ENCODE measurements at regions of chr17 and their contacts with region 1.

Region 1: GRCh38 chr17:21043286-21044232 is 748 bp upstream of the USP22 start:
- DNase-seq: peak; percentile 95
- H3K4me3 Mint-ChIP-seq: peak overlapping the region; percentile 75
- H3K27ac Mint-ChIP-seq: peak overlapping the region; percentile 88
- H3K4me1 Mint-ChIP-seq: peaks cover 15% of the 10 kb centered on the region
- H3K27me3 Mint-ChIP-seq: no peaks in the 10 kb centered on the region

Region 2: DNA sequence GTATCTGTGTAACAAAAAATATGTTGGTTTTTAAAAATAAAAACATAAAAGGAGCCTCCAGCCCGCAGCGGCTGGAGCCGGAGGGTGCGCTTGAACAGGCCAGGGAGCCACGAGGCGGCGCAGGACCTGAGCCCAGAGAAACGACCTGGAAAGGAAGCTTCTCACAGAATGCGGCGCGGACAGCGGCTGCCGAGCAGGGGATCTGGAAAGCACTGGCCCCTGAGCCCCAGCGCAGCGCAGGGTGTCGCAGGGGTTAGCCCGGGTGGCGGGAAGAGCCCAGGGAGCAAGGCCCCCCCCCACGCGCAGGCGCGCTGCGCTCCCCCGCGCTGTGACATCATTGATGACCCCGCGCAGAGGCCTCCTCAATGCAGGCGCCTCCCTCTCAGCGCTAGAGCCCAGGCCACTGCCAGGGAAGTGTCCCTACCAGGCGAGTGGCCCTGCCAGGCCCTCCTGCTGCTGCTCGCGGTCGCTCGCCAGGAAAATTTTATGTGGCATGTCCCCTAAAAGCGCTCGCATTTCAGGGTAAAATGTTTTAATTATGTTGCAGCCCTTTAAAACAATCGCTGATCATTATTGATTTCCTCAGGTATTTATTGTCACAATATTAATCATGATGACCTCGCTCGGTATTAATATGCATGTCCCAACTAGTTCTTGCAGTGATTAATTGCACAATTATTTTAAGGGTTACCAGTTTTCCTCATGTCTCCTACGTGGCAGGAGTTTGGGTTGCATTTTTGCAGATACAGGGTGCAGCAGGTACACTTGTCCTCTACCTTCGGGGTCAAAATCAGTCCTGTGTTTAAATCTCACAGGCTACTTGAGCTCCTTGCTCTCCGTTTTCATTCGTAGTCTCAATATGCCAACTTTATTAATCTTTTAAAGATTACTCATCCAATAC is 134.9 kb before region 1 on chr17:
- intact Hi-C with region 1: loop called (anchors 1 kb)
- DNase-seq: peak; percentile 73
- H3K4me3 Mint-ChIP-seq: peak overlapping the region; percentile 75
- H3K27ac Mint-ChIP-seq: peak overlapping the region; percentile 27
- H3K4me1 Mint-ChIP-seq: peaks cover 6% of the 10 kb centered on the region
- H3K27me3 Mint-ChIP-seq: peaks cover 14% of the 10 kb centered on the region

Region 3: GRCh38 chr17:21019976-21020586 is 23.5 kb before region 1 on chr17:
- intact Hi-C with region 1: loop called (anchors 1 kb)
- DNase-seq: no peak
- H3K4me3 Mint-ChIP-seq: no peak overlapping the region
- H3K27ac Mint-ChIP-seq: no peak overlapping the region
- H3K4me1 Mint-ChIP-seq: peaks cover 20% of the 10 kb centered on the region
- H3K27me3 Mint-ChIP-seq: no peaks in the 10 kb centered on the region

Region 4: DNA sequence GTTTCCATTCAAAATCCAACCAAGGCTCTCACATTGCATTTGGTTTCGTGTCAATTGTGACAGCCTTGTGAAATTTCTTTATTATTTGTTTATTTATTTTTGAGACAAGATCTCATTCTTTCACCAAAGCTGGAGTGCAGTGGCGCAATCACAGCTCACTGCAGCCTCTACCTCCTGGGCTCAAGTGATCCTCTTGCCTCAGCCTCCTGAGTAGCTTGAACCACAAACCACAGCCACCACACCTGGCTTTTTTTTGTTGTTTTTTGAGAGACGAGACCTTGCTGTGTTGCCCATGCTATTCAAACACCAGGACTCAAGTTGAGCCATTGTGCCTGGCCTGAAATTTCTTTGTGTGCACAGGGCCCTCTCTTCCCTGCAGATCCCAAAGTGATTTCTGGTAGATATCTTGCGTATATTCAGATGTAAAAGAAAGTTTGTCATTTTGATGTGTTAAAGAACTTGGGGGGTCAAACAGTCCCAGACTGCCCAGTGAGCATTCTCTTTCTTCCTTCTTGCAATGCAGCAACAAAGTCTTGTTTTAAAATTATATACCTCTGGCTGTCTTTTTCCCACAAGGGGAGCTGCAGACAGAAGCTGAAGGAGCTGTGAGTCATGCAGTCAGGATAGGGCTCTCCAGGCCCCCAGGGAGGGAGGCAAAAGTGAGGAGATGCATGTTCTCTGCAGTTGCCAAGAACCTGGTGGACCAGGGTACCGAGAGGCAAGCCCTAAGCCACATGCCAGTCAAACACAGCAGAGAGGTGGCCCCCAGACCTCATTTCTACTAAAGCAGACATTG is 14.7 kb after region 1 on chr17:
- intact Hi-C with region 1: no loop called
- DNase-seq: no peak
- H3K4me3 Mint-ChIP-seq: no peak overlapping the region
- H3K27ac Mint-ChIP-seq: no peak overlapping the region
- H3K4me1 Mint-ChIP-seq: no peaks in the 10 kb centered on the region
- H3K27me3 Mint-ChIP-seq: peaks cover 4% of the 10 kb centered on the region

Region 5: GRCh38 chr17:21098934-21099689 is 55.6 kb after region 1 on chr17:
- intact Hi-C with region 1: loop called (anchors 1 kb)
- DNase-seq: peak; percentile 68
- H3K4me3 Mint-ChIP-seq: peak overlapping the region; percentile 92
- H3K27ac Mint-ChIP-seq: peak overlapping the region; percentile 88
- H3K4me1 Mint-ChIP-seq: peaks cover 27% of the 10 kb centered on the region
- H3K27me3 Mint-ChIP-seq: no peaks in the 10 kb centered on the region

Region 6: GRCh38 chr17:21214015-21214776 is 170.6 kb after region 1 on chr17 and contains the start of gene TMEM11:
- intact Hi-C with region 1: loop called (anchors 1 kb)
- DNase-seq: peak; percentile 95
- H3K4me3 Mint-ChIP-seq: peak within 1 kb of the TSS; percentile 97
- H3K27ac Mint-ChIP-seq: peak within 1 kb of the TSS; percentile 91
- H3K4me1 Mint-ChIP-seq: peaks cover 55% of the 10 kb centered on the region
- H3K27me3 Mint-ChIP-seq: no peaks in the 10 kb centered on the region
- total RNA-seq, gene TMEM11: 33.5 and 35.6 TPM in 2 replicates

Region 7: GRCh38 chr17:21284319-21285163 is 241.0 kb after region 1 on chr17 and contains the start of gene MAP2K3:
- intact Hi-C with region 1: loop called (anchors 1 kb)
- DNase-seq: peak; percentile 97
- H3K4me3 Mint-ChIP-seq: peak within 1 kb of the TSS; percentile 100
- H3K27ac Mint-ChIP-seq: peak within 1 kb of the TSS; percentile 96
- H3K4me1 Mint-ChIP-seq: peaks cover 37% of the 10 kb centered on the region
- H3K27me3 Mint-ChIP-seq: peaks cover 5% of the 10 kb centered on the region
- total RNA-seq, gene MAP2K3: 177 and 185 TPM in 2 replicates

Region 8: DNA sequence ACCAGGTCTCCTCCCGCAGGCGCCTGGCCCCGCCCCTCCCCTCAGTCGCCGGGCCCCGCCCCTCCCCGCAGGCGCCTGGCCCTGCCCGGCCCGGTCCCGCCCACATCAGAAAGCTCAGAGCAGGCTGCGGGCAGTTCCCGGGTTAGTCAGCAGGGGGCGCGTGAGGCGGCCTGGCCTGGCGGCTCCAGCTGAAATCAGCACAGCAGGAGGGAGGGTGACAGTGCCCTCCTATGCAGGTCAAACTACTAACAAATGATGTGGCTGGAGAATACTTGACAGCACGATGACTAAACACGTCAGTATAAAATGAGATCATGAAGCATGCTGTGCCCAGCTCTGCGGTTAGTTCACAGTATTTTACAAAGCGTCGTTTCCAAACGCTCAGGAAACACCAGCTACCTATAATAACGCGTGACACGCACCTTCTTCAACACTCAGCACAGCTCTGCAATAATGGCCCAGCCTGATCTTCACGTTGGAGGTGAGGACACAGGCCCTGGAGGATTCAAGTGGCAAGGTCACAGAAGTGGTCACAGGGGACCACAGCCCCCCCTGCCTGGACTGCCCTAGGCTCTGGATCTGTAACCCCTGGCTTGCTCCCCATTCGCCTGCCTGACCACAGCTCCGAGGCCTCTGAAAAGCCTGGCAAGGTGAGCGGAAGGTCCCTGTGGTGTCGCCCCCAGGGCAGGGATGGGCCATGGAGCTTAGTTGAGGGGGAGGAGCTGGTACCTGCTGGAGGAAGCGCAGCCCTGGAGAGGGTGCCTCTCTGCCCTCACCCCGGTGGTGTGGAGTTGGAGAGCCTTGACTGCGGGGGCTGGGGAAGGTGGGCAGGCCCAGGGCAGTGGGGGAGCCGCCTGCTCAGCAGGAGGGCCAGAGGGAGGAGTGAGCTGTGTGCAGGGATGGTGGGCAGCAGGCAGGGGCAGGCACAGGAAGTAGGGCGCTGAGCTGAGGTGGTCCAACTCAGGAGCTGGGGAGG is 413.8 kb after region 1 on chr17:
- intact Hi-C with region 1: loop called (anchors 5 kb)
- DNase-seq: peak; percentile 85
- H3K4me3 Mint-ChIP-seq: no peak overlapping the region
- H3K27ac Mint-ChIP-seq: peak overlapping the region; percentile 64
- H3K4me1 Mint-ChIP-seq: peaks cover 10% of the 10 kb centered on the region
- H3K27me3 Mint-ChIP-seq: peaks cover 25% of the 10 kb centered on the region